ENCODE measurements at regions of chr4 and their contacts with region 1.

Region 1: GRCh38 chr4:182938205-182938645 is 21.0 kb upstream of the DCTD start:
- DNase-seq: peak; percentile 83

Region 2: DNA sequence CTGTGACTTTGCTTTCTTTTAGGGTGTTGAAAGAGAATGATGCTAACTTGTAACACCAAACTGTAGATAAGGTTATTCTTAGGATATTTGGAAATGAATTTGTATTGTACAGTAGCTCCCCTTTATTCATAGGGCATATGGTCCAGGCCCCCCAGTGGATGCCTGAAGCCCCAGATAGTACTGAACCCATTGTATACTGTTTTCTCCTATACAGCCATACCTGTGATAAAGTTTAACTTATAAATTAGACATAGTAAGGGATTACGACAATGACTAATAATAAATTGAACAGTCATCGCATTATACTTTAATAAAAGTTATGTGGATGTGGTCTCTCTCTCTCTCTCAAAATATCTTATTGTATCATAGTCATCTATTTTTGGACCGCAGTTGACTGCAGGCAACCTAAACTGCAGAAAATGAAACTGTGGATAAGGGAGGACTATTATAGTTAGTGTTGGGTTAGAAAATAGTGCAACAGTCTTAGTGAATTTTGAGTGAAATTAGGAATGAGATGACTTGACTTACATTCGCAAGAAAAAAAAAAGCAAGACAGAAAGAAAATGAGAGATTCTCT is 276.8 kb after region 1 on chr4:
- in situ Hi-C with region 1: no loop called
- DNase-seq: no peak

Region 3: DNA sequence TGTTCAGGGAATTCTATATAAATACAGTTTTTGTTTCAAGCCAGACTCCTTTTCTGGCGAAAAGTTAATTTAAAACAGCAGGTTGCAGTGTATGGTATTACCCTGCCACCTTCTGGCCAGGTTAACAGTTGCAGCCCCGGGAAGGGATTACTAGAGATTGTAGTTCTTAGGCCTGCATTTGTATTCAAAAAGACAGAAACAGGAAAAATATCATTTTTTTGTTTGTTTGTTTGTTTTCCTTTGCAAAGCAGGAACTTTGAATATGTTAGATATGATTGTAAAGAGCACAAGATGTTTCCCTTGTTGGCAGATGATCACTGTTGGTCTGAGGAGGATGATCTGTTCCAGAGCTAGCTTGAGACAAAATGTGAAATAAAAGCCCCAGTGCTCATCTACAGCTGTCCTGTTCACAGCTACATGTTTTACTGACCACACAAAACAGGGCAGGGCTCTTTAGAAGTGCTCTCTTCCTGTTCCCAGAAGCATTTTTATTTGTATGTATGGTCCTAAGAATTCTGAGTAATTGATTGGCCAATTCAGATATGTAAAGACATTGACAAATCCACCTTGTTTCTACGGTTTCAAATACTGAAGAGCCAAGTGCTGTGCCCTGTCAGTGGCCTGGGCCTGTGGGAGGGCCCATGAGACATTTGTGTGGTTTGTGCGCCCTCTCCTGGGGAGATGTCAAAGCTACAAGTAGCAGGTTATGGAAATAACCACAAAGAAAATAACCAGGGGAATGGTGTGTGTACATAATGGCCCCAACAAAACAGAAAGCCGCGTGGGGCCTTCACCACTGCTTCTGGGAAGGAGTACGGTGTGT is 323.9 kb after region 1 on chr4:
- in situ Hi-C with region 1: loop called (anchors 25 kb)
- DNase-seq: peak; percentile 85

Measured in SK-MEL-5 (cell line).